Breast epithelium (tissue), 4 donors: ENCODE measurements at regions of chr10 and their contacts with region 1.

Region 1: GRCh38 chr10:49645417-49646255 is 31.8 kb downstream of the CHAT start:
- DNase-seq: peak in 1 of 2 donors; percentile 22
- H3K4me3 ChIP-seq: no peak overlapping the region
- H3K27ac ChIP-seq: no peak overlapping the region
- H3K4me1 ChIP-seq: no peaks in the 10 kb centered on the region
- H3K27me3 ChIP-seq: peaks cover 0 to 47% of the 10 kb centered on the region in 2 donors
- CTCF ChIP-seq: no peak
- POLR2A ChIP-seq: no peak

Region 2: GRCh38 chr10:49661218-49661856 is 15.7 kb after region 1 on chr10:
- intact Hi-C with region 1: no loop called
- DNase-seq: no peak
- H3K4me3 ChIP-seq: no peak overlapping the region
- H3K27ac ChIP-seq: no peak overlapping the region
- H3K4me1 ChIP-seq: no peaks in the 10 kb centered on the region
- H3K27me3 ChIP-seq: peaks cover 0 to 4% of the 10 kb centered on the region in 2 donors
- CTCF ChIP-seq: no peak
- POLR2A ChIP-seq: no peak

Region 3: GRCh38 chr10:49679480-49679893 is 33.9 kb after region 1 on chr10 and contains the start of gene C10orf53:
- intact Hi-C with region 1: loop called (anchors 2 kb)
- DNase-seq: no peak
- H3K4me3 ChIP-seq: no peak within 1 kb of the TSS
- H3K27ac ChIP-seq: no peak within 1 kb of the TSS
- H3K4me1 ChIP-seq: no peaks in the 10 kb centered on the region
- H3K27me3 ChIP-seq: peaks cover 0 to 21% of the 10 kb centered on the region in 2 donors
- CTCF ChIP-seq: no peak
- POLR2A ChIP-seq: no peak
- total RNA-seq, gene C10orf53: not detected